ENCODE measurements at regions of chr16 and their contacts with region 1.

Region 1: GRCh38 chr16:57893559-57894389 is 77.2 kb downstream of the CNGB1 start:
- DNase-seq: peak; percentile 99
- ATAC-seq: peak; percentile 65
- H3K4me3 ChIP-seq: peak overlapping the region; percentile 52 to 71 (median 62)
- H3K27ac ChIP-seq: peak overlapping the region; percentile 95
- H3K4me1 ChIP-seq: peaks cover 94% of the 10 kb centered on the region
- H3K27me3 ChIP-seq: no peaks in the 10 kb centered on the region; a peak in 1 of 5 replicates
- CTCF ChIP-seq: no peak
- EP300 ChIP-seq: peak; percentile 83 to 95
- POLR2A ChIP-seq: peak; percentile 13 to 59; a peak in 3 of 4 replicates
- RAD21 ChIP-seq: no peak

Region 2: DNA sequence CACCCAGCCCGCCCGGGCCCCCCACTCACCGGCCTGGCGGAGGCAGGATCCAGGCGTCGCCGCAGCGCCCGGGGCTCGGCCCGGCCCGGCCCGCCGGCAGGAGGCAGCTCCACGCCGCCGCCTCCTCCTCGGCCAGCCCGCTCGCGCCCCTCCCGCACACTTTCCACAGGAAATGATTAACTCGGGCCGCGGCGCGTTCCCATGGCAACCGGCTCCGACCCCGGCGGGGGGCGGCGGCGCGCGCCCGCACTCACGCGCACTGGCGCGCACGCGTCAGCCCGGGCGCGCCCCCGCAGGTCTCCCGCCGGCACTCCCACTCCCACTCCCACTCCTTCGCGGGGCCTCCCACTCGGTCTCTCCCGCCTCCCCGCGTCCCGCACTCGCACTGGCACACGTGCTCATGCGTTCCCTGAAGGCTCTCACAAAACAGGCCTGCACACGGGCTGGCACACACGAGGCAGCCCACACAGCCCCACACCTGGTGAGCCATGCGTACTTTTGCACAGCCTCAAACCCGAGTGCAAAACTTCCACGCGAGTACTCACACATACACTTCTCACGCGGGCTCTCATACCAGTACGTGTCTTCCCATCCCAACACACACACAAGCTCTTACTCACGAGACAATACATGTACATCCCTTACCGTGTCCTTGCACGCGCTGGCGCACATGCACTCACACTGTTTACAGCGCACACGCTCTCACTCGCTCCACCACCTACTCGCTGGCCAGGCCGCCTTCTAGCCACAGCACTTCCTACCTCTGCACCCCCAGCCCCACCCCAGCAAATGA is 91.2 kb before region 1 on chr16 and contains the start of gene KIFC3:
- CTCF ChIA-PET with region 1: no interaction called
- POLR2A ChIA-PET with region 1: interaction called, 25 read pairs
- in situ Hi-C with region 1: no loop called
- intact Hi-C with region 1: loop called (anchors 2 kb)
- DNase-seq: peak; percentile 79
- ATAC-seq: peak; percentile 46
- H3K4me3 ChIP-seq: peak within 1 kb of the TSS; percentile 77 to 89 (median 82)
- H3K27ac ChIP-seq: peak within 1 kb of the TSS; percentile 73
- H3K4me1 ChIP-seq: peaks cover 83% of the 10 kb centered on the region
- H3K27me3 ChIP-seq: no peaks in the 10 kb centered on the region
- CTCF ChIP-seq: peak; percentile 50; the same call in 1 of the 2 replicates
- EP300 ChIP-seq: peak; percentile 6 to 42; a peak in 2 of 4 replicates
- POLR2A ChIP-seq: peak in 1 of 2 experiments; percentile 45; a peak in 2 of 4 replicates
- RAD21 ChIP-seq: peak; percentile 89
- total RNA-seq, gene KIFC3: 30.0 and 45.3 TPM in 2 replicates

Region 3: DNA sequence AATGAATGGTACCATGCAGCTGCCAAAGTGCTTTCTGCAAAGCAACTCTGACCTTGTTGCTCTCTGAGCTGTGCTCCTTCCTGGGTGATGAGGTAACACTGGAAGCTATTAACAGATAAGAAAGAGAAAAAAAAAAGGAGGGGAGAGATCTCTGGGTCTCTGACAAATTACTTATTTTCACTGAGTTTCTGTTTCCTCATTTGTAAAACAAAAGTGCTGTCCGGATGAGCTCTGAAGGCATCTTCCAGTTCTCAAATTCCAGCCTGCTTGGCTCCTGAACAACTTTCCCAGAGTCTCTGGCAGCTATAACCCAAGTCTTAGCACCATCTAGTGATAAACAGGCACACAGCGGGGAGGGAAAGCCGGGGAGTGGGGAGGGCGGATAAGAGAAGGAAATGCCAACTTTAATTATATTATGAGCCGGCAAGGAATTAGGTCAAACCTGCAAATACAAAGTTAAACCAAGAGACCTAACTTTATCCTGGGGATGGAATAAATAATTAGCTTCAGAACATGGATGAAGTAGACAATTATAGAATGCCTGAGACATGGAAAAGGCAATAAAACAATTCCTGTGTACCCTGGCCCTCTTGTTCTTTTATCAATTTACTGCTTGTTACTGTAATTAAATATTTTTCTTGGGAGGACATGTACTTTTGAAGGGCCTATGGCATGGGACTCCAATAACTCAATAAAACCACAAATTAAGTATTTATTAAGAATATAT is 30.2 kb before region 1 on chr16:
- CTCF ChIA-PET with region 1: no interaction called
- POLR2A ChIA-PET with region 1: interaction called, 73 read pairs
- in situ Hi-C with region 1: no loop called
- intact Hi-C with region 1: loop called (anchors 1 kb)
- DNase-seq: peak; percentile 68
- ATAC-seq: peak; percentile 54
- H3K4me3 ChIP-seq: peak overlapping the region in 2 of 3 experiments; percentile 65 to 72; a peak in 2 of 6 replicates
- H3K27ac ChIP-seq: peak overlapping the region; percentile 54
- H3K4me1 ChIP-seq: peaks cover 86% of the 10 kb centered on the region
- H3K27me3 ChIP-seq: no peaks in the 10 kb centered on the region
- CTCF ChIP-seq: peak; percentile 83
- EP300 ChIP-seq: no peak; a peak in 2 of 4 replicates
- POLR2A ChIP-seq: no peak
- RAD21 ChIP-seq: peak; percentile 68

Region 4: DNA sequence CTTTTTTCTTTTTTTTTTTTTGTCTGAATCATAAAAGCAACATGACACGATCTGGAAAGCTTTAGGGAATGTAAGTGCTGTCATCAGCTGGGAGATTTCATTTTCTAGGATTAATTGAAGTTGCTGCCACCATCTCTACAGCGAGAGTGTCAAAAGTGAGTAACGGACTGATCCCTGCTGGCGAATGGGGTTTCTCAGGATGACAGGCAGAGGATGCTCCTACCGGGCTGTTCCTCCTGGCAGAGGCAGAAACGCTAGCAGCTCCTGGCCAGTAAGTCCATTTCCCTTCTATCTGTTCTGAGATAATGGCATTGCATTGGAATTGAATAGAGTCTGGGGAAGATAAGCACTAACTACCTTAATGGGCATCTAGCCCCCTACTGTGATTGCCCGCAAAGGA is 11.0 kb before region 1 on chr16:
- CTCF ChIA-PET with region 1: no interaction called
- POLR2A ChIA-PET with region 1: interaction called, 12 read pairs
- in situ Hi-C with region 1: no loop called
- intact Hi-C with region 1: no loop called
- DNase-seq: no peak
- ATAC-seq: no peak
- H3K4me3 ChIP-seq: no peak overlapping the region
- H3K27ac ChIP-seq: no peak overlapping the region
- H3K4me1 ChIP-seq: peaks cover 38% of the 10 kb centered on the region
- H3K27me3 ChIP-seq: peaks cover 2 to 36% of the 10 kb centered on the region in 2 experiments; a peak in 4 of 5 replicates
- CTCF ChIP-seq: no peak
- EP300 ChIP-seq: no peak
- POLR2A ChIP-seq: no peak
- RAD21 ChIP-seq: no peak

Measured in HepG2 (cell line).